ENCODE measurements at regions of chr19 and their contacts with region 1.

Region 1: DNA sequence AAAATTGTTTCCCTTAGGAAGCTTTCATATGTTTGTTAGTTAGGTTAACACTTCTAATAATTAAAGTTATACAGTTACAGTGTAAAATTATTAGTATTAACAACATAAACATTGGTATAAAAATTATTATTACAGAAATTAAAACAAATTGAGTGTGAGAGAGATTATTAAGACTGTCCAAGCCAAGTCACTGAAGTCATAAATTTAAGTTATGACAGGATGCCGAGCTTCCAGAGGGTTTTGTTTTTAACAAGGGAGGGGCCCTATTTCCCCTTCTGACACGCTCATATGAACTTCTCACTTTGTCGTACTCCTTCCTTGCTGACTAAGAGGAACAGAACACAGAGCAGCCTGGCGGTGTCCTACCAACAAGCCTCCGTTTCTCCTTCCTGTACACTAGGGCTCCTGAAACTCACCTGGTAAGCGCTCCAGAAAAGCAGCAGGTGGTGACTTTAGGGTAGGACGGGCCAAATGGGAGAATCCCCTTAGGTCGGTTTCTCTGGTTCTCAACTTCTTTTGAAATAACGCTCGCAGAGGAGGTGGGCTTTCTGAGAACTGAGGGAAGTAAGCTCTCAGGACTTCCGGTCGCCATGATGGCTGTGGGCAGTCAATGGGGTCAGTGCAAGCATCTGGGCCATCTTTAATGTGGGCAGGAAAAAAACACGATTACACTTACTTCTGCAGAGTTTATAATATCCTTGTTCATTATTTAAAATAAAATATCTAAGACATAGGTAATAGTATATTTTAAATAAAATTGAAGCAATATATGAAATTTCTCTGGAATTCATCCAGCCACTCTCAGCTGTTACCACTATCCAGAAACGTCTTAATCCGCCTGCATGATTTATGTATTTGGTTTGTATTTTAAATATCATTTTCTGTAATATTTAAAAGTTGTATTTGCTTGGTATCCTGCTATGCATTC is at the start of gene CARD8:
- DNase-seq: peak; percentile 54 to 91 (median 84)
- ATAC-seq: peak; percentile 85
- H3K4me3 ChIP-seq: peak within 1 kb of the TSS; percentile 100
- H3K4me3 Mint-ChIP-seq: peak within 1 kb of the TSS; percentile 74 to 100 (median 99)
- H3K27ac ChIP-seq: peak within 1 kb of the TSS; percentile 88
- H3K27ac Mint-ChIP-seq: peak within 1 kb of the TSS; percentile 90 to 100 (median 97)
- H3K4me1 ChIP-seq: peaks cover 53 to 56% of the 10 kb centered on the region in 2 donors
- H3K4me1 Mint-ChIP-seq: peaks cover 51 to 86% (median 76%) of the 10 kb centered on the region in 7 donors
- H3K27me3 ChIP-seq: no peaks in the 10 kb centered on the region
- H3K27me3 Mint-ChIP-seq: no peaks in the 10 kb centered on the region
- total RNA-seq, gene CARD8: 104 to 301 (median 182) TPM

Region 2: DNA sequence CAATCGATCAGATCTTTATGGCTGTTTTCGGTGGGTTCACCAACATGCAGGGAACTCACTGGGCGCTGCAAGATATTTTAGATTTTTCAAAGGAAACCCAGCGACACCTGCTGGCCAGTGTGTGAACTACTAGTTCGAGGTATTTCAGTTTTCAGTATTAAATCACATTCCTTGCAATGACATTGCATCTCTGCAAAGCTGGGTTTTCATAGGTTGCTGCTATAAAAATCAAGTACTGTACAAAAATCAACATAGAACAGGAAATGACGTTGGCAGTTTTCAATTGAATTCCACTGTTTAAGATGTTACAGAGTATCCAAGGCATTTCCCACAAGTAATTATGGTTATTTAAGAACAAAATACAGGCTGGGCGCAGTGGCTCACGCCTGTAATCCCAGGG is 103.1 kb before region 1 on chr19:
- CTCF ChIA-PET with region 1: no interaction called
- POLR2A ChIA-PET with region 1: no interaction called
- intact Hi-C with region 1: loop called in 1 of 2 experiments (anchors 1 kb)
- DNase-seq: peak; percentile 28 to 67 (median 50)
- ATAC-seq: peak; percentile 75
- H3K4me3 ChIP-seq: no peak overlapping the region
- H3K4me3 Mint-ChIP-seq: no peak overlapping the region
- H3K27ac ChIP-seq: no peak overlapping the region
- H3K27ac Mint-ChIP-seq: peak overlapping the region in 1 of 9 donors; percentile 74
- H3K4me1 ChIP-seq: no peaks in the 10 kb centered on the region
- H3K4me1 Mint-ChIP-seq: peaks cover 0 to 13% (median 2%) of the 10 kb centered on the region in 7 donors
- H3K27me3 ChIP-seq: no peaks in the 10 kb centered on the region
- H3K27me3 Mint-ChIP-seq: no peaks in the 10 kb centered on the region

Region 3: GRCh38 chr19:48194041-48194871 is 61.4 kb before region 1 on chr19:
- CTCF ChIA-PET with region 1: no interaction called
- POLR2A ChIA-PET with region 1: interaction called, 4 read pairs
- intact Hi-C with region 1: loop called in 1 of 2 experiments (anchors 1 kb)
- DNase-seq: peak in 3 of 9 donors; percentile 9 to 17 (median 17)
- ATAC-seq: no peak
- H3K4me3 ChIP-seq: no peak overlapping the region
- H3K4me3 Mint-ChIP-seq: peak overlapping the region in 1 of 10 donors; percentile 55
- H3K27ac ChIP-seq: no peak overlapping the region
- H3K27ac Mint-ChIP-seq: peak overlapping the region in 2 of 9 donors; percentile 36 to 46
- H3K4me1 ChIP-seq: no peaks in the 10 kb centered on the region
- H3K4me1 Mint-ChIP-seq: peaks cover 0 to 17% (median 6%) of the 10 kb centered on the region in 7 donors
- H3K27me3 ChIP-seq: no peaks in the 10 kb centered on the region
- H3K27me3 Mint-ChIP-seq: no peaks in the 10 kb centered on the region

Region 4: DNA sequence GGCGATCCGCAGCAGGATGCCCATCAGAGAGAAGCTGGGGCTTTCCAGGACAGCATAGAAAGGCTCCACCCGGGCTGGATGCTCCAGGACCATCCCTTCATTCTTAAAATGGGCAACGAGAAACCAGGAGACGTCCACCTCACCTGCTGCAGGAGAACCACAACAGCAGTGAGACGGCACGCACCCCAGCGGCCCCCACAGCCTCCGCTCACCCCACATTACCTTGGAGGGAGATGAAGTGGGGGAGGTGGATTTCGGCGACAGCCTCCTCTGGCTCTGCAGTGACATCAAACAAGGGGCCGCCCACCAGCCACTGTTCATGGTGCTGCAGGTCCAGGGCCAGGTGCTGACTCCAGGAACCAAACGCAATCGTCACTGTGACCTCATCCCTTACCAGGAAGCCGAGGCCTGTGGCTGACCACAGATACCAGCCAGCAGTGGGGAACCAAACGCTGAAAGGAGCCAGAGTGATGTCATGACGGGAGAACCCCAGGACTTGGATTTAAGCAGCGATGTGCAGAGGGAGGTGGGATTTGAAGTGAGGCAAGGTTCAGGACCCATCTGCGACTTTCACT is 25.0 kb before region 1 on chr19:
- CTCF ChIA-PET with region 1: no interaction called
- POLR2A ChIA-PET with region 1: interaction called, 3 read pairs
- intact Hi-C with region 1: loop called in 1 of 2 experiments (anchors 2 kb)
- DNase-seq: no peak
- ATAC-seq: peak; percentile 37
- H3K4me3 ChIP-seq: no peak overlapping the region
- H3K4me3 Mint-ChIP-seq: no peak overlapping the region
- H3K27ac ChIP-seq: no peak overlapping the region
- H3K27ac Mint-ChIP-seq: peak overlapping the region in 4 of 9 donors; percentile 4 to 69 (median 54)
- H3K4me1 ChIP-seq: no peaks in the 10 kb centered on the region
- H3K4me1 Mint-ChIP-seq: peaks cover 3 to 23% (median 7%) of the 10 kb centered on the region in 7 donors
- H3K27me3 ChIP-seq: no peaks in the 10 kb centered on the region
- H3K27me3 Mint-ChIP-seq: no peaks in the 10 kb centered on the region

Region 5: DNA sequence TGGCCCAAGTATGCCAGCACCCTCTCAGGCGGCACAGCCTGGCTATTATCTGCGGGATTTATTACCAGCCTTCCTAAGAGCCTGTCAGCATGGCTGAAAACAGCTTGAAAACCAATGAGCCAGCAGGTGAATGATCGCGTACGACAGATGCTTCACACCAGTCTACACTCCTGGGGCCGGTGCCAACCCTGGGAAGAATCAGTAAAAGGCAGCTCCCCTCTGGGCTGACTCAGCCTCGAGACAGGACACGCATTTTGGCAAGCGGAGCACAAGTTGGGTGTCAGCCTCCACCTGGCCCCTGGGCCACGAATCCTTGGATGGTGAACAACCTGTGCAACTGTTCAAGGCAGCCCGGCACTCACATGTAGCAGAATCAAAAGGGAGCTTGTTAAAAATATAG is 85.4 kb after region 1 on chr19:
- CTCF ChIA-PET with region 1: no interaction called
- POLR2A ChIA-PET with region 1: no interaction called
- intact Hi-C with region 1: no loop called
- DNase-seq: no peak
- ATAC-seq: no peak
- H3K4me3 ChIP-seq: no peak overlapping the region
- H3K4me3 Mint-ChIP-seq: no peak overlapping the region
- H3K27ac ChIP-seq: no peak overlapping the region
- H3K27ac Mint-ChIP-seq: no peak overlapping the region
- H3K4me1 ChIP-seq: no peaks in the 10 kb centered on the region
- H3K4me1 Mint-ChIP-seq: no peaks in the 10 kb centered on the region
- H3K27me3 ChIP-seq: no peaks in the 10 kb centered on the region
- H3K27me3 Mint-ChIP-seq: no peaks in the 10 kb centered on the region

Region 6: GRCh38 chr19:49157445-49158224 is 902.0 kb after region 1 on chr19 and contains the start of gene TRPM4:
- CTCF ChIA-PET with region 1: no interaction called
- POLR2A ChIA-PET with region 1: no interaction called
- intact Hi-C with region 1: no loop called
- DNase-seq: peak in 4 of 9 donors; percentile 13 to 75 (median 22)
- ATAC-seq: peak; percentile 75
- H3K4me3 ChIP-seq: no peak within 1 kb of the TSS
- H3K4me3 Mint-ChIP-seq: peak within 1 kb of the TSS in 9 of 10 donors; percentile 12 to 74 (median 55)
- H3K27ac ChIP-seq: no peak within 1 kb of the TSS
- H3K27ac Mint-ChIP-seq: peak within 1 kb of the TSS in 1 of 9 donors; percentile 21
- H3K4me1 ChIP-seq: peaks cover 0 to 7% of the 10 kb centered on the region in 2 donors
- H3K4me1 Mint-ChIP-seq: peaks cover 5 to 13% (median 7%) of the 10 kb centered on the region in 7 donors
- H3K27me3 ChIP-seq: peaks cover 0 to 14% of the 10 kb centered on the region in 2 donors
- H3K27me3 Mint-ChIP-seq: peaks cover 54 to 68% (median 63%) of the 10 kb centered on the region in 5 donors
- total RNA-seq, gene TRPM4: 0.72 to 3.2 (median 0.85) TPM in 4 of 5 experiments, not detected in the other

Measured in naive thymus-derived CD4-positive, alpha-beta T cell (primary cell).